Activated CD4-positive, alpha-beta memory T cell treated with anti-CD3 and anti-CD28 coated beads, Interleukin-2, amount 10 ng/mL, durations not matched to agents 7 days and 5 days (primary cell): ENCODE measurements at regions of chr10 and their contacts with region 1.

Region 1: DNA sequence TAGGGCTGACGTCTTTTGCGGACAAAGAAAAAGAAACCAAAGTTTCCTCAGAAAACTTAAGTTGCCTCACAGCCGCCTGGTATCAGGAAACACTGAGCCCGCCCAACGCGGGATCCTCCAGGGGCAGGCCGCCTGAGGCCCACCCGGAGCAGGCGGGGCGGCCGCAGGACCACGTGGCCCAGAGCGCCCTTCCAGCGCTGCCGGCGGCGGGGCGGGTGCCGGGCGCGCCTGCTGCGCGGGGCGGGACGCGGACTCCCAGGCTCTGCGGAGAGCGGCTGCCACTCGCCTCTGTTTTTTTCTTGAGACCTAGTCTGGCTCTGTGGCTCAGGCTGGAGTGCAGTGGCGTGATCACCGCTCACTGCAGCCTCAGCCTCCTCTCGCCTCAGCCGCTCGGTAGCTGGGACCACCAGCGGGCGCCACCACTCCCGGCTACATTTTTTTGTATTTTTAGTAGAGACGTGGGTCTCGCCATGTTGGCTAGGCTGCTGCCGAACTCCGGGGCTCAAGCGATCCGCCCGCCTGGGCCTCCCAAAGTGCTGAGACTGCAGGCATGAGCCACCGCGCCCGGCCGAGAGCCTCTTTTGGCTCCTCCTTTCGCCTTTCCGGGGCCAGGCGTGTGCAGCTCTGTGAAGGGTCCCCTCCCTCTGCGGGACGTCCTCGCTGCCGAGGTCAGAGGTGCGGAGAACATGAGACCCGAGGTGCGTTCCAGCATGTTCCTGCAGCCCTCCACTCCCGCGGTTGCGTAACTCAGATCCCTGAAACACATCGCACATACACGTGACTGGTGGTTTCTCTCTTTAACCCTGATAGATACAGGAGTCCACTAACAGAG is 11.6 kb upstream of the HNRNPF start:
- DNase-seq: peak; percentile 90
- H3K4me3 Mint-ChIP-seq: peak overlapping the region; percentile 85
- H3K27ac Mint-ChIP-seq: peak overlapping the region; percentile 99
- H3K4me1 Mint-ChIP-seq: peaks cover 47% of the 10 kb centered on the region
- H3K27me3 Mint-ChIP-seq: no peaks in the 10 kb centered on the region

Region 2: DNA sequence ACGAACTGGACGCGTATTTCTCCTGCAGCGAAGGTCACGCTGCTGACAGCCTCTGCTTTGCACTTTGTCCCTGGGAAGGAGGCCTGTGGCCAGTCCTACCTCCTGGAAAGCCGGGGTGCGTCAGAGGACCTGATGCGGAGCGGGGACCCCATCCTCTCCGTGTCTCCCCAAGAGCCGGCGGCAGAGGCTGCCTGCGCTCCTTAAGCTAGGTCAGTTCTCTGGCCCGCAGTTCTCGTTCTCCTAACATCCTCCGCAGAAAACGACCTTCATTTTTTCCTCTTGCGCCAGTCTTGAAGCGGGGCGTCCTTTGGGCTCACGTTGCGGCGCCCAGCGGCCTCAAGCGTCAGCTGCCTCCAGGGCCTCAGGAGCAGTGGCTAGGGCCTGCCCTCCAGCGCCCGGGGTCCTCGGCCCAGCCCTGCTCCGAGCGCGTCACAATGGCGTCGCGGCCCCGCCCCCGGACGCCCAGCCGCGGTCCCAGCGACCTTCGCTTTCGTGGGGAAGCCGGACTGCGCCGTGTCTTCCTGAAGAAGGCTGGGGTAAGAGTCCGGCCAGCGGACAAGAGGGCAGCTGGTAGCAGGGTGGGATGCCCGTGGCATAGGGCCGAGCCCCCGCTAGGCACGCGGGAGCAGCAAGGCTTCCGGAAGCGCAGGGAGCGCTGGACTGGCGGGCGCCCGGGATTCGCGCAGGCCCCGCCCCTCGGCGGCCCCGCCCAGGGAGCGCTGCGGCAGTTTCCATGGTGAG is 16.0 kb after region 1 on chr10 and contains the start of gene ZNF487:
- CTCF ChIA-PET with region 1: interaction called, 7 read pairs
- POLR2A ChIA-PET with region 1: interaction called, 36 read pairs
- DNase-seq: peak; percentile 92
- H3K4me3 Mint-ChIP-seq: peak within 1 kb of the TSS; percentile 95
- H3K27ac Mint-ChIP-seq: peak within 1 kb of the TSS; percentile 95
- H3K4me1 Mint-ChIP-seq: peaks cover 32% of the 10 kb centered on the region
- H3K27me3 Mint-ChIP-seq: no peaks in the 10 kb centered on the region
- total RNA-seq, gene ZNF487: 6.1 TPM

Region 3: GRCh38 chr10:43444313-43444712 is 23.7 kb after region 1 on chr10:
- CTCF ChIA-PET with region 1: interaction called, 8 read pairs
- POLR2A ChIA-PET with region 1: interaction called, 36 read pairs
- DNase-seq: no peak
- H3K4me3 Mint-ChIP-seq: no peak overlapping the region
- H3K27ac Mint-ChIP-seq: peak overlapping the region; percentile 67
- H3K4me1 Mint-ChIP-seq: peaks cover 19% of the 10 kb centered on the region
- H3K27me3 Mint-ChIP-seq: no peaks in the 10 kb centered on the region